Activated T-helper 1 cell treated with anti-CD3 and anti-CD28 coated beads, Interleukin-12 subunit alpha, Interleukin-12 subunit beta, Interleukin-2, Interleukin-4 antibody, amounts not matched to agents 30 ng/mL and 10 ng/mL and 1 ng/mL, durations not matched to agents 14 hours and 24 hours and 36 hours (primary cell): ENCODE measurements at regions of chr6 and their contacts with region 1.

Region 1: GRCh38 chr6:89145787-89146646 is at the start of gene PM20D2:
- DNase-seq: peak; percentile 59
- H3K4me3 Mint-ChIP-seq: peak within 1 kb of the TSS; percentile 93
- H3K27ac Mint-ChIP-seq: peak within 1 kb of the TSS; percentile 98
- H3K4me1 Mint-ChIP-seq: peaks cover 40% of the 10 kb centered on the region
- H3K27me3 Mint-ChIP-seq: peaks cover 11% of the 10 kb centered on the region
- total RNA-seq, gene PM20D2: 14.1 TPM in 2 replicates

Region 2: GRCh38 chr6:88982720-88983119 is 163.3 kb before region 1 on chr6:
- intact Hi-C with region 1: loop called (anchors 1 kb)
- DNase-seq: no peak
- H3K4me3 Mint-ChIP-seq: no peak overlapping the region
- H3K27ac Mint-ChIP-seq: no peak overlapping the region
- H3K4me1 Mint-ChIP-seq: no peaks in the 10 kb centered on the region
- H3K27me3 Mint-ChIP-seq: peaks cover 4% of the 10 kb centered on the region

Region 3: GRCh38 chr6:89098461-89098860 is 47.6 kb before region 1 on chr6:
- intact Hi-C with region 1: loop called (anchors 1 kb)
- DNase-seq: no peak
- H3K4me3 Mint-ChIP-seq: no peak overlapping the region
- H3K27ac Mint-ChIP-seq: no peak overlapping the region
- H3K4me1 Mint-ChIP-seq: peaks cover 7% of the 10 kb centered on the region
- H3K27me3 Mint-ChIP-seq: no peaks in the 10 kb centered on the region

Region 4: DNA sequence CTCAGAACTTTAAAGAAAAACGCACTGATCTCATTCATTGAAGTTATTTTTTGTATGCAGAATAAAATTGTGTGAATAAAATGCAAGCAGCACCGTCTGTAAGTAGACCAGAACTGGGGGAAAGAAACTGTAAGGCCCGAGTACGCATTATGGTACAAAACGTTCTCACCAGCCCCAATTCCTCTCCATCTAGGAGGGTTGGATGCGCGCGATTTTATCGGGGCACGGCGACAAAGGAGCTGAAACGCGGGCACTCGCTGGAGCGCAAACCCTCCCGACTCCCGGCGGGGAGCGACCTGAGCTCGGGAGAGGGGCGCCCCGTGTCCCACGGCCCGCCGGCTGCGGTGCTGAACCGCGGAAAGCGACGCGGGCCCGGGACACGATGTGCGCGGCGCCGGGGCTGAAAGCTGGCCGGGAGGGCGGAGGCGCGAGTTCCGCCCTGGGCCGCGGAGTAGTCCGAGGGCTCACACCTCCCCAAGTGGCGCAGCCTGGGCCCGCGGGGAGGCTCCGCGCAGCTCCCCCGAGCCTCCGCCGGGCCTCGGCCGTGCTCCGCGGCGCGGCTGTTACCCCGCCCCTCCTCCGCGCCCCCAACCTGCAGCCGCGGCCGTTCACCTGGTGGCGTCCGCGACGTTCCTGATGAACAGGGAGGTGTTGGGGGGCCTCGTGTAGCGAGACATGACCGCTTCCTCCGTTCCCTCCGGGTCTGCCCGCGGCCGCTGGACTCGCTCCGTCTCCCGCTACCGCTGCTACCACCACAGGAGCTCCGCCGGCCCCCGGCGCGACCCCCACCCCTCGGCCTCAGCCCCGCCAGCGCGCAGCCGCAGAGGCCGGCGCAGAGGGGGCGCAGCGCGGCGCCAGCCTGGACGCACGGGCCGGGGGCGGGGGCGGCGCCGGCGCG is 28.6 kb before region 1 on chr6 and contains the start of gene SRSF12:
- intact Hi-C with region 1: loop called (anchors 1 kb)
- DNase-seq: peak; percentile 3
- H3K4me3 Mint-ChIP-seq: peak within 1 kb of the TSS; percentile 75
- H3K27ac Mint-ChIP-seq: no peak within 1 kb of the TSS
- H3K4me1 Mint-ChIP-seq: peaks cover 6% of the 10 kb centered on the region
- H3K27me3 Mint-ChIP-seq: peaks cover 44% of the 10 kb centered on the region
- total RNA-seq, gene SRSF12: 0.07 and 0.10 TPM in 2 replicates

Region 5: GRCh38 chr6:89180971-89181370 is 35.0 kb after region 1 on chr6:
- intact Hi-C with region 1: no loop called
- DNase-seq: no peak
- H3K4me3 Mint-ChIP-seq: no peak overlapping the region
- H3K27ac Mint-ChIP-seq: no peak overlapping the region
- H3K4me1 Mint-ChIP-seq: no peaks in the 10 kb centered on the region
- H3K27me3 Mint-ChIP-seq: peaks cover 7% of the 10 kb centered on the region

Region 6: GRCh38 chr6:89297695-89298351 is 151.8 kb after region 1 on chr6:
- intact Hi-C with region 1: loop called (anchors 2 kb)
- DNase-seq: peak; percentile 64
- H3K4me3 Mint-ChIP-seq: peak overlapping the region; percentile 43
- H3K27ac Mint-ChIP-seq: peak overlapping the region; percentile 97
- H3K4me1 Mint-ChIP-seq: peaks cover 28% of the 10 kb centered on the region
- H3K27me3 Mint-ChIP-seq: peaks cover 2% of the 10 kb centered on the region

Region 7: GRCh38 chr6:89352278-89353117 is 206.5 kb after region 1 on chr6 and contains the start of gene UBE2J1:
- intact Hi-C with region 1: loop called (anchors 2 kb)
- DNase-seq: peak; percentile 75
- H3K4me3 Mint-ChIP-seq: peak within 1 kb of the TSS; percentile 96
- H3K27ac Mint-ChIP-seq: peak within 1 kb of the TSS; percentile 96
- H3K4me1 Mint-ChIP-seq: peaks cover 82% of the 10 kb centered on the region
- H3K27me3 Mint-ChIP-seq: no peaks in the 10 kb centered on the region
- total RNA-seq, gene UBE2J1: 38.1 and 40.5 TPM in 2 replicates

Region 8: GRCh38 chr6:89412071-89413005 is 266.3 kb after region 1 on chr6 and contains the start of gene RRAGD:
- intact Hi-C with region 1: loop called (anchors 1 kb)
- DNase-seq: peak; percentile 49
- H3K4me3 Mint-ChIP-seq: peak within 1 kb of the TSS; percentile 95
- H3K27ac Mint-ChIP-seq: peak within 1 kb of the TSS; percentile 94
- H3K4me1 Mint-ChIP-seq: peaks cover 25% of the 10 kb centered on the region
- H3K27me3 Mint-ChIP-seq: peaks cover 50% of the 10 kb centered on the region
- total RNA-seq, gene RRAGD: 7.8 and 10.1 TPM in 2 replicates